ENCODE measurements at regions of chr12 and their contacts with region 1.

Region 1: GRCh38 chr12:31874961-31875608 is 84.1 kb upstream of the RESF1 start:
- DNase-seq: no peak
- ATAC-seq: peak; percentile 90
- H3K4me3 ChIP-seq: no peak overlapping the region
- H3K27ac ChIP-seq: peak overlapping the region; percentile 57
- H3K4me1 ChIP-seq: peaks cover 19% of the 10 kb centered on the region
- H3K27me3 ChIP-seq: no peaks in the 10 kb centered on the region
- CTCF ChIP-seq: no peak

Region 2: GRCh38 chr12:31922341-31923062 is 47.4 kb after region 1 on chr12:
- CTCF ChIA-PET with region 1: no interaction called
- POLR2A ChIA-PET with region 1: interaction called, 11 read pairs
- in situ Hi-C with region 1: no loop called
- intact Hi-C with region 1: no loop called
- DNase-seq: no peak
- ATAC-seq: no peak
- H3K4me3 ChIP-seq: no peak overlapping the region
- H3K27ac ChIP-seq: no peak overlapping the region
- H3K4me1 ChIP-seq: no peaks in the 10 kb centered on the region
- H3K27me3 ChIP-seq: no peaks in the 10 kb centered on the region
- CTCF ChIP-seq: no peak

Region 3: GRCh38 chr12:32076941-32077340 is 201.9 kb after region 1 on chr12:
- CTCF ChIA-PET with region 1: no interaction called
- POLR2A ChIA-PET with region 1: no interaction called
- in situ Hi-C with region 1: no loop called
- intact Hi-C with region 1: no loop called
- DNase-seq: no peak
- ATAC-seq: no peak
- H3K4me3 ChIP-seq: no peak overlapping the region
- H3K27ac ChIP-seq: no peak overlapping the region
- H3K4me1 ChIP-seq: no peaks in the 10 kb centered on the region
- H3K27me3 ChIP-seq: no peaks in the 10 kb centered on the region
- CTCF ChIP-seq: no peak

Measured in Panc1 (cell line).